Activated CD4-positive, alpha-beta T cell treated with anti-CD3 and anti-CD28 coated beads, Interleukin-2, amount 10 ng/mL, durations not matched to agents 7 days and 5 days (primary cell): ENCODE measurements at regions of chr3 and their contacts with region 1.

Region 1: DNA sequence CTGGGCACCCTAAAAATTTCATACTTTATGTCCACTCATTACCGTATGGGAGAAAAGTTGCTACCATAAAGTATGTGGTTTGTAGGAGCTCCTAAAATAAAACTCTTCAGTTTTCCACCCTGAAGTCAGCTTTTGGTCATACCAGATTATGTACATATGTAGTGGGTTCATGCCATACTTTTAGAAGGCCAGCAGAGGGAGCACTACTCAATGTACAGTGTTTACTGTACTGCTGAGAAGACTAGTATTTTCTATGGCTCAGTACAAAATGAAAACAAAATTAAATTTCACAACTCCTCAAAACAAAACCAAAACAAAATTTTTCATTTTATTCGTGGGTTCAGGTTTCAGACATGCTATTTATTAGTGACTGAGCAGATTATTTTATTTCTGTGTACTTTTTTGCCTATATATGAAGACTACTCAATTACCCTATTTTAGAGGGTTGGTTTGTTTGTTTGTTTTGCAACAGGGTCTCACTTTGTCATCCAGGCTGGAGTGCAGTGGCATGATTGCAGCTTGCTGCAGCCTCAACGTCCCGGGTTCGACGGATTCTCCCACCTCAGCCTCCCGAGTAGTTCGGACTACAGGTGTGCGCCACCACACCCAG is 24.3 kb downstream of the NXPE3 start:
- DNase-seq: peak; percentile 83
- H3K4me3 Mint-ChIP-seq: no peak overlapping the region
- H3K27ac Mint-ChIP-seq: peak overlapping the region; percentile 66
- H3K4me1 Mint-ChIP-seq: peaks cover 18% of the 10 kb centered on the region
- H3K27me3 Mint-ChIP-seq: no peaks in the 10 kb centered on the region

Region 2: GRCh38 chr3:101784855-101785613 is 18.2 kb before region 1 on chr3:
- CTCF ChIA-PET with region 1: interaction called, 12 read pairs
- POLR2A ChIA-PET with region 1: no interaction called
- DNase-seq: peak; percentile 22
- H3K4me3 Mint-ChIP-seq: peak overlapping the region; percentile 68
- H3K27ac Mint-ChIP-seq: peak overlapping the region; percentile 91
- H3K4me1 Mint-ChIP-seq: peaks cover 66% of the 10 kb centered on the region
- H3K27me3 Mint-ChIP-seq: no peaks in the 10 kb centered on the region